ENCODE measurements at regions of chr2 and their contacts with region 1.

Region 1: GRCh38 chr2:72862239-72862988 is 24.8 kb upstream of the SPR start:
- DNase-seq: peak; percentile 93 to 97
- ATAC-seq: peak; percentile 97 to 99
- H3K4me3 ChIP-seq: peak overlapping the region; percentile 41
- H3K27ac ChIP-seq: peak overlapping the region; percentile 12 to 58; a peak in 2 of 6 replicates
- H3K4me1 ChIP-seq: peaks cover 10% of the 10 kb centered on the region; the same call in 2 of the 3 replicates
- CTCF ChIP-seq: peak; percentile 99
- EP300 ChIP-seq: no peak
- POLR2A ChIP-seq: no peak
- RAD21 ChIP-seq: peak; percentile 88

Region 2: GRCh38 chr2:72694715-72695496 is 167.5 kb before region 1 on chr2:
- CTCF ChIA-PET with region 1: no interaction called
- POLR2A ChIA-PET with region 1: no interaction called
- DNase-seq: peak in 1 of 2 experiments; percentile 50
- ATAC-seq: peak; percentile 19 to 76; a peak in 4 of 6 replicates
- H3K4me3 ChIP-seq: no peak overlapping the region
- H3K27ac ChIP-seq: peak overlapping the region in 1 of 2 experiments; percentile 36; a peak in 4 of 6 replicates
- H3K4me1 ChIP-seq: peaks cover 26% of the 10 kb centered on the region
- CTCF ChIP-seq: no peak
- EP300 ChIP-seq: no peak
- POLR2A ChIP-seq: no peak
- RAD21 ChIP-seq: no peak; a peak in 1 of 5 replicates

Region 3: DNA sequence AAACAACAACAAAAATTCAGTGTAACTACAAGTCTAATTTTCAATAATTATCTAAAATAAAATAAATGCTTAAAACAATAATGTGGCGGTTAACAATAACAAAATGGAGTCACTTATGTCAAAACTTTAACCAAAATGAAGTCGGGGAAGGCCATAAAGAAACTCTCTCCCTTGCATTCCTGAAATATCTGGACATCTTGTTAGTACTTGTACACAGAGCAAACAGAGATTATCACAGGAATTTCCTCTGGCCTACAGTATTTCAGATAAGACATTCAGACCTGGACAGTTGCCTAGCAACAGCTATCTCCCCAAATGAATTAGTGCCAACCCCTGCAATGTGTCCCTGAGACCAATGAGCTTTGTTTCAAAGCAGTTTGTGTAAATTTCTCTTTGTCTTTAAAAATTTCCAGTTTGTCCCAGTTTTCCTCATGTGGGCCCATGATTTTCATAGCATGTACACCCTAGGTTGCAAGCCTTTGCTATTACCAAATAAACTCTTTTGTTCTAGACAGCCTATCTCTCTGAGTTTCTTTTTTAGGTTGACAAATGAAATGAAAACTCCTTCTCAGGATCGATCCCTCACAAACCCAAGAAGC is 105.1 kb before region 1 on chr2:
- CTCF ChIA-PET with region 1: interaction called, 11 read pairs
- POLR2A ChIA-PET with region 1: interaction called, 3 read pairs
- DNase-seq: peak; percentile 29 to 85
- ATAC-seq: peak; percentile 69 to 93; a peak in 5 of 6 replicates
- H3K4me3 ChIP-seq: no peak overlapping the region
- H3K27ac ChIP-seq: peak overlapping the region; percentile 73 to 74
- H3K4me1 ChIP-seq: peaks cover 40% of the 10 kb centered on the region
- CTCF ChIP-seq: no peak
- EP300 ChIP-seq: no peak; a peak in 1 of 5 replicates
- POLR2A ChIP-seq: no peak
- RAD21 ChIP-seq: no peak

Region 4: GRCh38 chr2:72780477-72780876 is 81.9 kb before region 1 on chr2:
- CTCF ChIA-PET with region 1: interaction called, 38 read pairs
- POLR2A ChIA-PET with region 1: interaction called, 4 read pairs
- DNase-seq: peak in 1 of 2 experiments; percentile 25
- ATAC-seq: peak in 1 of 2 experiments; percentile 56; a peak in 3 of 6 replicates
- H3K4me3 ChIP-seq: no peak overlapping the region
- H3K27ac ChIP-seq: no peak overlapping the region; a peak in 1 of 6 replicates
- H3K4me1 ChIP-seq: peaks cover 38% of the 10 kb centered on the region
- CTCF ChIP-seq: no peak
- EP300 ChIP-seq: no peak
- POLR2A ChIP-seq: no peak
- RAD21 ChIP-seq: no peak

Region 5: GRCh38 chr2:72803151-72803550 is 59.3 kb before region 1 on chr2:
- CTCF ChIA-PET with region 1: interaction called, 13 read pairs
- POLR2A ChIA-PET with region 1: no interaction called
- DNase-seq: no peak
- ATAC-seq: no peak
- H3K4me3 ChIP-seq: no peak overlapping the region
- H3K27ac ChIP-seq: no peak overlapping the region
- H3K4me1 ChIP-seq: peaks cover 8% of the 10 kb centered on the region; the same call in 2 of the 3 replicates
- CTCF ChIP-seq: no peak
- EP300 ChIP-seq: no peak
- POLR2A ChIP-seq: no peak
- RAD21 ChIP-seq: no peak

Region 6: GRCh38 chr2:72819496-72819895 is 42.9 kb before region 1 on chr2:
- CTCF ChIA-PET with region 1: interaction called, 30 read pairs
- POLR2A ChIA-PET with region 1: no interaction called
- DNase-seq: no peak
- ATAC-seq: no peak
- H3K4me3 ChIP-seq: no peak overlapping the region
- H3K27ac ChIP-seq: no peak overlapping the region
- H3K4me1 ChIP-seq: peaks cover 43% of the 10 kb centered on the region
- CTCF ChIP-seq: no peak
- EP300 ChIP-seq: no peak
- POLR2A ChIP-seq: no peak
- RAD21 ChIP-seq: no peak

Region 7: GRCh38 chr2:72833084-72833709 is 29.2 kb before region 1 on chr2:
- CTCF ChIA-PET with region 1: interaction called, 28 read pairs
- POLR2A ChIA-PET with region 1: no interaction called
- DNase-seq: no peak
- ATAC-seq: no peak; a peak in 1 of 6 replicates
- H3K4me3 ChIP-seq: no peak overlapping the region
- H3K27ac ChIP-seq: no peak overlapping the region
- H3K4me1 ChIP-seq: peaks cover 2% of the 10 kb centered on the region
- CTCF ChIP-seq: no peak
- EP300 ChIP-seq: no peak
- POLR2A ChIP-seq: no peak
- RAD21 ChIP-seq: no peak

Region 8: DNA sequence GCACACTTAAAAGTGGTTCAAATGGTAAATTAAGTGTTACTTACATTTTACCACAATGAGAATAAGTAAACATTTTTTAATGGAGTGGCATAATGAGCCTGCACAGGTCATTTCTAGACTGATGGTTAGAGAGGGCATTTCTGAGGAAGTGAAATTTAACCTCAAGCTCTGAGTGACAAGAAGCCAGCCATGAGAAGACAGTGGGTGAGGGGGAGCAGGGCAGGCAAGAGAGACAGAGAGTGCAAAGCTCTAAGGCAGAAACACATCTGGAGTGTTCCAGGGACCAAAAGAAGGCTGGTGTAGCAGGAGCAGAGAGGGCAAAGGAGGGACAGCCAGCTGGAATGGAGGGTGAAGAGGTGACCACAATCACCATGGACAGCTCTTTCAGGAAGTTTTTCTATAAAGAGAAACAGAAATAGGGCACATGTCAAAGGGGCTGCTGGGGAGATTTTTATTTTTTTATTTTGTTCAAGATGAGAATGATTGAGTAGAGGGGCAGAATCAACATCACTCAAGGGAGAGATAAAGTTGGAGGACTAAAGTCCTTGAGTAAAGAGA is 15.8 kb before region 1 on chr2:
- CTCF ChIA-PET with region 1: interaction called, 78 read pairs
- POLR2A ChIA-PET with region 1: no interaction called
- DNase-seq: no peak
- ATAC-seq: no peak
- H3K4me3 ChIP-seq: no peak overlapping the region
- H3K27ac ChIP-seq: no peak overlapping the region
- H3K4me1 ChIP-seq: no peaks in the 10 kb centered on the region
- CTCF ChIP-seq: no peak
- EP300 ChIP-seq: no peak
- POLR2A ChIP-seq: no peak
- RAD21 ChIP-seq: no peak

Measured in A549 (cell line).